ENCODE measurements at regions of chr17 and their contacts with region 1.

Region 1: GRCh38 chr17:61689610-61690180 is 98.7 kb upstream of the NACA2 start:
- DNase-seq: no peak
- H3K4me3 ChIP-seq: no peak overlapping the region
- H3K27ac ChIP-seq: no peak overlapping the region
- H3K4me1 ChIP-seq: no peaks in the 10 kb centered on the region
- H3K27me3 ChIP-seq: no peaks in the 10 kb centered on the region
- CTCF ChIP-seq: no peak

Region 2: GRCh38 chr17:61647047-61647446 is 42.6 kb before region 1 on chr17:
- CTCF ChIA-PET with region 1: no interaction called
- POLR2A ChIA-PET with region 1: interaction called, 17 read pairs
- intact Hi-C with region 1: no loop called
- DNase-seq: no peak
- H3K4me3 ChIP-seq: no peak overlapping the region
- H3K27ac ChIP-seq: no peak overlapping the region
- H3K4me1 ChIP-seq: no peaks in the 10 kb centered on the region
- H3K27me3 ChIP-seq: no peaks in the 10 kb centered on the region
- CTCF ChIP-seq: no peak

Region 3: GRCh38 chr17:61660728-61661485 is 28.8 kb before region 1 on chr17:
- CTCF ChIA-PET with region 1: no interaction called
- POLR2A ChIA-PET with region 1: no interaction called
- intact Hi-C with region 1: no loop called
- DNase-seq: no peak
- H3K4me3 ChIP-seq: no peak overlapping the region
- H3K27ac ChIP-seq: no peak overlapping the region
- H3K4me1 ChIP-seq: no peaks in the 10 kb centered on the region
- H3K27me3 ChIP-seq: no peaks in the 10 kb centered on the region
- CTCF ChIP-seq: no peak